CD8-positive, alpha-beta T cell (primary cell): ENCODE measurements at regions of chr10 and their contacts with region 1.

Region 1: DNA sequence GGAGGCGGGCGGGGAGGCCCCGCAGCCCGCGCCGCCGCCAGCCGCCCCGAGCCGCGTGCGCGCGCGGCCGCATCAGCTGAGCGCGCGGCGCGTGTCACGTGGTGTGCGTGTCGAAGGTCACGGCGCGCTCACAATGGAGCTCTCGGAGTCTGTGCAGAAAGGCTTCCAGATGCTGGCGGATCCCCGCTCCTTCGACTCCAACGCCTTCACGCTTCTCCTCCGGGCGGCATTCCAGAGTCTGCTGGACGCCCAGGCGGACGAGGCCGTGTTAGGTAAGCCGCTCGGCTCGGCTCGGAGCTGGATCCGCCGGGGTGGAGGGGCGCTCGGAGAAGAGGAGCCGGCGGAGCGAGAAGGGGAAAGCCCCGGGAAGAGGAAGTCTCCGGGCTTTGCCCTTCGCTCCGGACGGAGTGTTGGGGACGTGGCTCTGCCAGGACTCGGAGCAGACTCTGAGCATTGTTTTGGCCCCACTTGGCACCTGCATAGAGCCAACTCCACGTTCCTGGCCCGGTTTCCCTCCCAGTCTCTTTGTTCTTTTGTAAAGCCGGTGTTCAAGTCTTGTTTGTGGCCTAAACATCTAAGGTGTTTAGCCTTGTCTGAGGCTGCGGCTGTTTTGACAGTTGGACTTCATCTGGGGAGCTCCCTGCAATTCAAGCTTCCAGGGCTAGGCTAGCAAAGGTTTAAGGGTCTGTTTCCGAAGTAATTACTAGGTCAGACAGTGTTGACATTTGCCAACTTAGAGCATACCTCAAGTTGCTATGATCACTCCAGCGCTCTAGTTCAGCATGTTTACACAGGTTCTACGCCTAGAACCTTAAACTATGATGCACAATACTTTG is at the start of gene COMMD3:
- DNase-seq: peak; percentile 58 to 93 (median 80)
- ATAC-seq: peak; percentile 54
- H3K4me3 ChIP-seq: peak within 1 kb of the TSS; percentile 83 to 86
- H3K4me3 Mint-ChIP-seq: peak within 1 kb of the TSS; percentile 91
- H3K27ac ChIP-seq: peak within 1 kb of the TSS; percentile 82 to 87
- H3K27ac Mint-ChIP-seq: peak within 1 kb of the TSS; percentile 95
- H3K4me1 ChIP-seq: peaks cover 27% of the 10 kb centered on the region
- H3K4me1 Mint-ChIP-seq: peaks cover 31% of the 10 kb centered on the region
- H3K27me3 ChIP-seq: peaks cover 7 to 15% of the 10 kb centered on the region in 2 experiments
- H3K27me3 Mint-ChIP-seq: peaks cover 14% of the 10 kb centered on the region
- CTCF ChIP-seq: no peak
- total RNA-seq, gene COMMD3: 19.2 to 22.1 TPM

Region 2: GRCh38 chr10:21516242-21517131 is 800.0 kb before region 1 on chr10:
- CTCF ChIA-PET with region 1: no interaction called
- POLR2A ChIA-PET with region 1: interaction called, 3 read pairs
- intact Hi-C with region 1: loop called in 1 of 2 experiments (anchors 5 kb)
- DNase-seq: peak in 5 of 9 experiments; percentile 43 to 78 (median 70)
- ATAC-seq: peak; percentile 66
- H3K4me3 ChIP-seq: peak overlapping the region; percentile 29 to 33
- H3K4me3 Mint-ChIP-seq: peak overlapping the region; percentile 83
- H3K27ac ChIP-seq: no peak overlapping the region
- H3K27ac Mint-ChIP-seq: no peak overlapping the region
- H3K4me1 ChIP-seq: peaks cover 38% of the 10 kb centered on the region
- H3K4me1 Mint-ChIP-seq: peaks cover 36% of the 10 kb centered on the region
- H3K27me3 ChIP-seq: peaks cover 68 to 71% of the 10 kb centered on the region in 2 experiments
- H3K27me3 Mint-ChIP-seq: peaks cover 82% of the 10 kb centered on the region
- CTCF ChIP-seq: no peak

Region 3: GRCh38 chr10:21533467-21534279 is 782.8 kb before region 1 on chr10 and contains the start of gene MLLT10:
- CTCF ChIA-PET with region 1: no interaction called
- POLR2A ChIA-PET with region 1: no interaction called
- intact Hi-C with region 1: loop called (anchors 2 to 5 kb)
- DNase-seq: peak; percentile 83 to 98 (median 92)
- ATAC-seq: peak; percentile 84
- H3K4me3 ChIP-seq: peak within 1 kb of the TSS; percentile 69 to 81
- H3K4me3 Mint-ChIP-seq: peak within 1 kb of the TSS; percentile 96
- H3K27ac ChIP-seq: peak within 1 kb of the TSS; percentile 64 to 75
- H3K27ac Mint-ChIP-seq: peak within 1 kb of the TSS; percentile 94
- H3K4me1 ChIP-seq: peaks cover 16% of the 10 kb centered on the region
- H3K4me1 Mint-ChIP-seq: peaks cover 29% of the 10 kb centered on the region
- H3K27me3 ChIP-seq: no peaks in the 10 kb centered on the region
- H3K27me3 Mint-ChIP-seq: no peaks in the 10 kb centered on the region
- CTCF ChIP-seq: peak; percentile 22
- total RNA-seq, gene MLLT10: 36.7 to 41.0 TPM

Region 4: GRCh38 chr10:22228943-22229801 is 87.3 kb before region 1 on chr10:
- CTCF ChIA-PET with region 1: interaction called, 10 read pairs
- POLR2A ChIA-PET with region 1: interaction called, 20 read pairs
- intact Hi-C with region 1: loop called (anchors 1 kb)
- DNase-seq: peak; percentile 66 to 92 (median 86)
- ATAC-seq: peak; percentile 76
- H3K4me3 ChIP-seq: peak overlapping the region; percentile 67 to 77
- H3K4me3 Mint-ChIP-seq: peak overlapping the region; percentile 82
- H3K27ac ChIP-seq: peak overlapping the region; percentile 60 to 63
- H3K27ac Mint-ChIP-seq: peak overlapping the region; percentile 98
- H3K4me1 ChIP-seq: peaks cover 8% of the 10 kb centered on the region
- H3K4me1 Mint-ChIP-seq: peaks cover 14% of the 10 kb centered on the region
- H3K27me3 ChIP-seq: peaks cover 0 to 3% of the 10 kb centered on the region in 2 experiments
- H3K27me3 Mint-ChIP-seq: no peaks in the 10 kb centered on the region
- CTCF ChIP-seq: no peak

Region 5: GRCh38 chr10:22251751-22252223 is 64.7 kb before region 1 on chr10:
- CTCF ChIA-PET with region 1: interaction called, 3 read pairs
- POLR2A ChIA-PET with region 1: interaction called, 4 read pairs
- intact Hi-C with region 1: loop called (anchors 2 kb)
- DNase-seq: peak; percentile 25 to 82 (median 63)
- ATAC-seq: peak; percentile 59
- H3K4me3 ChIP-seq: peak overlapping the region; percentile 59 to 67
- H3K4me3 Mint-ChIP-seq: peak overlapping the region; percentile 94
- H3K27ac ChIP-seq: peak overlapping the region; percentile 77 to 85
- H3K27ac Mint-ChIP-seq: peak overlapping the region; percentile 98
- H3K4me1 ChIP-seq: peaks cover 6% of the 10 kb centered on the region
- H3K4me1 Mint-ChIP-seq: peaks cover 24% of the 10 kb centered on the region
- H3K27me3 ChIP-seq: peaks cover 9 to 10% of the 10 kb centered on the region in 2 experiments
- H3K27me3 Mint-ChIP-seq: peaks cover 30% of the 10 kb centered on the region
- CTCF ChIP-seq: no peak

Region 6: DNA sequence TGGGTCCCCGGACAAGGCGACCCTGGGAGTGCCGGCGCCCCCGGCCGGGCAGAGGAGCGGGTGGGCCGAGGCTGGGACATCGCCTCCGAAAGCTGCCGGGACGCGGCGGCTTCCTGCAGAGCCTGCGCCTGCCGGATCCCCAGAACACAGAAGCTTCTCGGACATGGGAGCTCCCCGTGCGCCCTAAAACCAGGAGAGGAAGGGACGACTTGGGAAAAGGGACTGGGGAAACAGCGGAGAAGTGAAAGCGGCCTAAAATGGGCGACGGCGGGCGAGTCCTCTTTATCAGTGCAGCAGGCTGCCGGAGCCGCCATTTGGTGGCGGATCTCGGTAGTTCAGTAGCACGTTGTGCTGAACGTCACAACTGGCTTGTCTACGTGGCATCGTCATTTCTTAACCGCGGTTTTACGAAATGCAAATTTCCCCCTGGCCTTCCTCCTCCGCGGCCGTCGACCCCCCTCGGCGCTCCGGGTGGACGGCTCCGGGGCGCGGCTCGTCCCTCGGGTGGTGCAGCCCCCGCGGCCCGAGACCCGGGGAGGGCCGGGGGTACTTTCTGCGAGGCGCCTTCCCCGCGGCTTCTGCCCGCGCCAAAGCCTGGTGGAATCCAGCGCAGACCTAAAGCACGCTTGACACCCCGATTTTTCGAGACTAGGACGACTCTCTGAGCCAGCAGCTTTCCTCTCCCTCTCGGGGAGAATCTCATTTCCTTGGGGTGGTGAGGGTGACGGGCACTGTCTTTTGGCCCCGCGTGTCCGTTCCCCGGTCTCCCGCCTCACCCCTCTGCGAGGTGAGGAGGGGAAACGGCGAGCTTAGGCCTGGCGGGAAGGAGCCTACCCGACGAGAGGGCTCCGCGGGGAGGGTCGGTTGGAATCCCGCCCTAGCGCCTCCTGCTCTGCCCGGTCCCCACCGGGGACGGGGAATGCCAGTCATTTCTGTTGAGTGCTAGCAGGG is 18.9 kb after region 1 on chr10:
- CTCF ChIA-PET with region 1: no interaction called
- POLR2A ChIA-PET with region 1: interaction called, 10 read pairs
- intact Hi-C with region 1: loop called in 1 of 2 experiments (anchors 1 kb)
- DNase-seq: peak in 6 of 9 experiments; percentile 64 to 93 (median 81)
- ATAC-seq: peak; percentile 81
- H3K4me3 ChIP-seq: peak overlapping the region; percentile 50 to 55
- H3K4me3 Mint-ChIP-seq: peak overlapping the region; percentile 86
- H3K27ac ChIP-seq: peak overlapping the region; percentile 31 to 32
- H3K27ac Mint-ChIP-seq: peak overlapping the region; percentile 92
- H3K4me1 ChIP-seq: peaks cover 52% of the 10 kb centered on the region
- H3K4me1 Mint-ChIP-seq: peaks cover 34% of the 10 kb centered on the region
- H3K27me3 ChIP-seq: peaks cover 46 to 52% of the 10 kb centered on the region in 2 experiments
- H3K27me3 Mint-ChIP-seq: peaks cover 42% of the 10 kb centered on the region
- CTCF ChIP-seq: no peak

Region 7: GRCh38 chr10:22340362-22341189 is 24.1 kb after region 1 on chr10:
- CTCF ChIA-PET with region 1: no interaction called
- POLR2A ChIA-PET with region 1: interaction called, 10 read pairs
- intact Hi-C with region 1: loop called in 1 of 2 experiments (anchors 1 kb)
- DNase-seq: peak in 6 of 9 experiments; percentile 50 to 75 (median 64)
- ATAC-seq: peak; percentile 39
- H3K4me3 ChIP-seq: peak overlapping the region; percentile 50 to 70
- H3K4me3 Mint-ChIP-seq: peak overlapping the region; percentile 87
- H3K27ac ChIP-seq: peak overlapping the region; percentile 25 to 40
- H3K27ac Mint-ChIP-seq: peak overlapping the region; percentile 84
- H3K4me1 ChIP-seq: peaks cover 18% of the 10 kb centered on the region
- H3K4me1 Mint-ChIP-seq: peaks cover 14% of the 10 kb centered on the region
- H3K27me3 ChIP-seq: peaks cover 74 to 87% of the 10 kb centered on the region in 2 experiments
- H3K27me3 Mint-ChIP-seq: peaks cover 67% of the 10 kb centered on the region
- CTCF ChIP-seq: no peak